GM10248 (cell line): ENCODE measurements at regions of chr5 and their contacts with region 1.

Region 1: GRCh38 chr5:138844812-138845513 is 30.2 kb downstream of the LRRTM2 start:
- DNase-seq: no peak
- CTCF ChIP-seq: no peak

Region 2: GRCh38 chr5:138178516-138179276 is 666.3 kb before region 1 on chr5 and contains the starts of genes BRD8 and KIF20A:
- CTCF ChIA-PET with region 1: no interaction called
- POLR2A ChIA-PET with region 1: no interaction called
- DNase-seq: peak; percentile 93
- CTCF ChIP-seq: no peak

Region 3: GRCh38 chr5:138824924-138825863 is 19.8 kb before region 1 on chr5:
- CTCF ChIA-PET with region 1: interaction called, 13 read pairs
- POLR2A ChIA-PET with region 1: no interaction called
- DNase-seq: peak; percentile 56
- CTCF ChIP-seq: peak; percentile 40

Region 4: GRCh38 chr5:138832218-138832617 is 12.7 kb before region 1 on chr5:
- CTCF ChIA-PET with region 1: interaction called, 10 read pairs
- POLR2A ChIA-PET with region 1: no interaction called
- DNase-seq: no peak
- CTCF ChIP-seq: no peak

Region 5: DNA sequence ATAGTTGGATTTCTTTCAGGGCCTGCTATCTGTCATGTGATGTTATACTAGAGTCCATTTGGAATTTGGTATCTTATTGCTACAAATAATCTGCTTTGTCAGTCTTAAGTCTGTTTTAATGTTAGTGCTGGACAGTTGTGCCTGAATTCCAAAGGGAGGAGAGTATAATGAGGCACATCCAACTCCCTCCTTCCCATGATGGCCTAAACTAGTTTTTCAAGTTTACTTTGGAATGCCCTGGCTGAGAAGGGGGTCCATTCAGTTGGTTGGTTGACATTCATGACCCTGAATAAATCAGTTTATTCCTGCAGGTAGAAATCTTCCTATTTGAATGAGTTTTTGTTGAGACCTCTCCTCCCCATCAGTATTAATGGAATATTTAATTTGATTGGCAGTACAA is 39.6 kb after region 1 on chr5:
- CTCF ChIA-PET with region 1: no interaction called
- POLR2A ChIA-PET with region 1: no interaction called
- DNase-seq: no peak
- CTCF ChIP-seq: no peak

Region 6: GRCh38 chr5:138989720-138990119 is 144.8 kb after region 1 on chr5:
- CTCF ChIA-PET with region 1: no interaction called
- POLR2A ChIA-PET with region 1: no interaction called
- DNase-seq: no peak
- CTCF ChIP-seq: no peak

Region 7: GRCh38 chr5:139633295-139634027 is 788.5 kb after region 1 on chr5:
- CTCF ChIA-PET with region 1: no interaction called
- POLR2A ChIA-PET with region 1: no interaction called
- DNase-seq: peak; percentile 75
- CTCF ChIP-seq: peak; percentile 99